Heart left ventricle (tissue), 16 donors: ENCODE measurements at regions of chr13 and their contacts with region 1.

Region 1: GRCh38 chr13:91078093-91078679 is 269.3 kb upstream of the MIR17HG start:
- DNase-seq: no peak
- ATAC-seq: no peak
- H3K4me3 ChIP-seq: no peak overlapping the region
- H3K27ac ChIP-seq: no peak overlapping the region
- H3K4me1 ChIP-seq: no peaks in the 10 kb centered on the region
- H3K27me3 ChIP-seq: no peaks in the 10 kb centered on the region
- CTCF ChIP-seq: peak in 6 of 12 donors; percentile 7 to 41 (median 34)
- POLR2A ChIP-seq: no peak

Region 2: DNA sequence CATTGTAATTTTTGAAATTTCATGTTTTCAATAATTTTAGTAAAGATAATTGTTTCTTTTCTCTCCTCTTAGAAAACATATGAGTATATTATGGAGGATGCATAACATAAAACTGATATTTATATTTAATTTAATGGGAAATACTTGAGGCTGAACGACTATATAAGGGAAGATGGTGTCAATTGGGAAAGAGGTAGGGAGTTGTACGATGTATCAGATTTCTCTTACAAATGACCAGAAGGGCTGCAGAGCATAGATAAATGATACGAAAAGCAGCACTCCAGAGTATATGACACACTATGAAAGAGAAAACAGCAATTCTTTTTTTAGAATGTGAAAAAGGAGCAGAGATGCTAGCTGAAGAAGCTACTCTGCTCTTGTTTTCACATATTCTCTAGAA is 1038.7 kb before region 1 on chr13:
- intact Hi-C with region 1: no loop called
- DNase-seq: no peak
- ATAC-seq: no peak
- H3K4me3 ChIP-seq: no peak overlapping the region
- H3K27ac ChIP-seq: no peak overlapping the region
- H3K4me1 ChIP-seq: no peaks in the 10 kb centered on the region
- H3K27me3 ChIP-seq: no peaks in the 10 kb centered on the region
- CTCF ChIP-seq: no peak
- POLR2A ChIP-seq: no peak

Region 3: GRCh38 chr13:91185294-91185863 is 107.2 kb after region 1 on chr13:
- intact Hi-C with region 1: loop called in 1 of 10 experiments (anchors 5 kb)
- DNase-seq: no peak
- ATAC-seq: peak in 3 of 4 donors; percentile 42 to 52 (median 42)
- H3K4me3 ChIP-seq: no peak overlapping the region
- H3K27ac ChIP-seq: no peak overlapping the region
- H3K4me1 ChIP-seq: no peaks in the 10 kb centered on the region
- H3K27me3 ChIP-seq: peaks cover 0 to 21% (median 0%) of the 10 kb centered on the region in 9 donors
- CTCF ChIP-seq: peak in 10 of 12 donors; percentile 15 to 51 (median 42)
- POLR2A ChIP-seq: no peak